ENCODE measurements at regions of chr11 and their contacts with region 1.

Region 1: DNA sequence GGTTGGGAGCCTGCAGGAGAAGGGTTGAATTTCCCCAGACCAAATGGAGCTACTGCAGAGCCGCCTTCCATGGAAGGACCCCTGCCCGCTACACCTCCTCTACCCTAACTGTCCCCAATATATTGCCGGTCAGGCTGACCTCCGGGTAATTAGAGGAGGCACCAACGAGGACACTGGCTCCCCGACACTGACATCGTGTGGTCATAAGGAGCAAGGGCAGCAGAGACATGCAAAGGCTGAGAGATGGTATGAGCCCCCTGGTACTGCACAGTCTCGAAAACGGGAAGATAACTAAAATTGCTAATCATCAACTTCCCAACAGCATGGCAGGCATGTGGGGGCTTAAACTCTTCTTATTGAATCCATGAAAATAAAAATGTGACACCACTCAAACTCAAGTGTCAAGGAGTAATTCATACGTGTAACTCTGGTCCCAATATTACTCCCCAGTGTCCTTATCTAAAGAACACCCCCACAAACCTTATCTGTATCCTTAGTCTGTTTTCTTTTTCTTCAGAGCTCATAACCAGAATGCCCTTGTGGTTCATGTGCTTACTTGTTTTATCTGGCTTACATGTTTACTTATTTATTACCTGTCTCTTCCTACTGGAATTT is 4.4 kb downstream of the CAVIN3 start:
- DNase-seq: peak; percentile 71
- ATAC-seq: no peak

Region 2: DNA sequence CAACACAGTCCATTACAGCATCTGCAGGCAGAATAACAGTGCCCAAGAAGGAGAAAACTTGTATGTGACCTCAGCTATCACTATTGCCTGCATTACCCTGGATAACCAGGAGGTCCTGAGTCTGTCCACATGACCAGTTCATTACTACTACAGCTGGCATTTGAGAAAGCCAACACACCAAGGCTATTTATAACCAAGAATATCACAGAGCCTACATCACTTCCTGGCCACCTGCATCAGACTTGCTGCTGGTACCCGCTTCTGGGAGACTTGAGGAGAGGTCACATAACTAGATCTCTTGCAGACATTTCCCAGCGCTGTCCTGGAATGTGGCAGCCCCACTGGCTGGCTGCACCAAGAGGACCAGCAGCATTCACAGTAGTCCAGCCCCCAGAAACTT is 219.5 kb before region 1 on chr11:
- intact Hi-C with region 1: no loop called
- DNase-seq: no peak
- ATAC-seq: peak; percentile 51

Region 3: GRCh38 chr11:6234387-6235107 is 81.4 kb before region 1 on chr11 and contains the start of gene FHIP1B:
- intact Hi-C with region 1: loop called (anchors 10 kb)
- DNase-seq: peak; percentile 99
- ATAC-seq: peak; percentile 98
- total RNA-seq, gene FHIP1B: 16.3 TPM

Measured in left ventricle myocardium superior (tissue), 1 donor.